ENCODE measurements at regions of chr14 and their contacts with region 1.

Region 1: GRCh38 chr14:70317969-70318634 is 41.4 kb downstream of the COX16 start:
- DNase-seq: no peak
- H3K4me3 ChIP-seq: no peak overlapping the region
- CTCF ChIP-seq: no peak
- POLR2A ChIP-seq: no peak

Region 2: GRCh38 chr14:69149461-69150244 is 1168.4 kb before region 1 on chr14:
- intact Hi-C with region 1: loop called (anchors 5 kb)
- DNase-seq: no peak
- H3K4me3 ChIP-seq: no peak overlapping the region
- CTCF ChIP-seq: no peak
- POLR2A ChIP-seq: no peak

Region 3: GRCh38 chr14:69501423-69501838 is 816.7 kb before region 1 on chr14:
- intact Hi-C with region 1: loop called (anchors 10 kb)
- DNase-seq: no peak
- H3K4me3 ChIP-seq: no peak overlapping the region
- CTCF ChIP-seq: no peak
- POLR2A ChIP-seq: no peak

Region 4: GRCh38 chr14:70268760-70269159 is 49.3 kb before region 1 on chr14:
- intact Hi-C with region 1: no loop called
- DNase-seq: no peak
- H3K4me3 ChIP-seq: no peak overlapping the region
- CTCF ChIP-seq: no peak
- POLR2A ChIP-seq: no peak

Region 5: DNA sequence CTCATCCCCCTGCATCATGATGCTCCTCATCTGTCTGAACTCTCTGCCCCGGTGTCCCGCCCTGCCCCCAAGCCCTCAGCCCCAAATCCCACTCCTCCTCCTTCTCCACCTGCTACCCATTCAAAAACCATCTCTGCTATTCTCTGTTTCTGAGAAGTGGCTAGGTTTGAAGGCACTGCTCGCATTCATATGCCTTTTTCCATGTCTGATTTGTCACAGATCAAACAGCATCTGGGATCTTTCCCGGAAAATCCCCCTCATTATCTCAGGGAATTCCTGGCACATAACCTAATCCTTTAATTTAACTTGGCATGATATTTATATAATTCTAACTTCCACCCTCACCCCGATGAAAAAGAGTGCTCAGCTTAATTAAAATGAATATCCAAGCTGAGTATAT is 220.0 kb after region 1 on chr14:
- intact Hi-C with region 1: no loop called
- DNase-seq: no peak
- H3K4me3 ChIP-seq: no peak overlapping the region
- CTCF ChIP-seq: no peak
- POLR2A ChIP-seq: no peak

Measured in lower leg skin (tissue), 4 donors.